T-cell (primary cell): ENCODE measurements at regions of chr20 and their contacts with region 1.

Region 1: DNA sequence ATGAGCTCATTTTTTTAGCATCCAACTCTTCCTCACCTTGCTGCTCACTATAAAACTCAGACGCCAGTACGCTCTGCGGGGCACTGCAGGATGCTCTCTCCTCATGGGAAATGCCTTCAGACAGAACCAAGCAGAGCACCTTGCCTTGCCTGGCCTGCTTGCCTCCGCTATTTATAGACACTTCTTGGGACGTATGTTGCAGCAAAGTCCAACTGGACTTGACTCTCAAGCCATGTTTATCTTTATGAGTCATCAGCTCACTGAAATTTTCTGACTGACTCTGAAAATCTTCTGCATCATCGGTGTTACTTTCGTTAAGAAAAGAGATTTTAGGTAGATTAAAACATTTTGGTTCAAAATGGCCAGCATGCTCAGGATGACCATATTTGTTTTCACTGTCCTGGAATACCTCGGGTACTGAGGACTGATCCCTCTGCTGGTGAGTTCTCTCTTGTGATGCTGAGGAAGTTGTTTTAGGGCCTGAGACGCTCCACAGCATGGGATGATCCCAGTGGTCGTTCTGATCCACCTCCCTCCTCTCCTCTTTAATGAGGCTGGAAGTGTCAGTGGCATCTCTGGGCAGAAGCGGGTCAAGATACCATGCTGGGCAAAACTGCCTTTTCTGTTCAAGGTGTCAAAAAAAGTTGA is 204.5 kb downstream of the KIF16B start:
- DNase-seq: no peak
- ATAC-seq: no peak
- H3K4me3 ChIP-seq: no peak overlapping the region
- H3K4me3 Mint-ChIP-seq: no peak overlapping the region
- H3K27ac ChIP-seq: no peak overlapping the region
- H3K27ac Mint-ChIP-seq: no peak overlapping the region
- H3K4me1 ChIP-seq: no peaks in the 10 kb centered on the region
- H3K4me1 Mint-ChIP-seq: no peaks in the 10 kb centered on the region
- H3K27me3 ChIP-seq: no peaks in the 10 kb centered on the region
- H3K27me3 Mint-ChIP-seq: no peaks in the 10 kb centered on the region

Region 2: DNA sequence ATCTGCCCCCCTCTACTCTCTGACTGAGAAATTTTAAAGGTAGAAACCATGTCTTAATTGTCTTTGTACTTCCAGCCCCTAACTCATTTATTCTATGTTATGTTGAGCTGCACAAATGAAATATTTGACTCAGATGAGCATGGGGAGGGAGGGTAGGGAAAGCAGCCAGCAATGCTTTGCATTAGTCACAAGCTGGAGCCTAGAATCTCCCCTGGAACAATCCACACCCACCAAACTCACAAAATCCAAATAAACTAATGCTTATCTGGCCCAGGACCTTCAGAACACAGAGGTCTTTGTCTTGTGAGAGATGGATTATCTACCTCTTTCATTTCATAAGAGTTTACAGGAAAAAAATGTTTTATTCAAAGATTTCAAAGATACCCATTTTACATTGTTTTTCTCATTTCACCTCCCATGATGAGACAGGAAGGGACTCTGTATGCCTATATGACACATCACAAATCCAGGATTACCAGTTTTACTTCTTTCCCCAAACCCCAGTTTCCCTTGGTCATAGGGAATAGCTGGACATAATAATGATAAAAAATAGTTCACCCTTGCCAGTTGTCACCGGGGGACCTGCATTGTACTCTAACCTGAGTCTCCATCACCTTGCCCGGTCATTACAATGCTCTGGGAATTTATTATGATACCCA is 262.4 kb before region 1 on chr20:
- CTCF ChIA-PET with region 1: interaction called in 1 of 2 experiments, 11 read pairs
- POLR2A ChIA-PET with region 1: no interaction called
- DNase-seq: no peak
- ATAC-seq: no peak
- H3K4me3 ChIP-seq: no peak overlapping the region
- H3K4me3 Mint-ChIP-seq: no peak overlapping the region
- H3K27ac ChIP-seq: no peak overlapping the region
- H3K27ac Mint-ChIP-seq: no peak overlapping the region
- H3K4me1 ChIP-seq: no peaks in the 10 kb centered on the region
- H3K4me1 Mint-ChIP-seq: peaks cover 0 to under 1% (median 0%) of the 10 kb centered on the region in 3 donors
- H3K27me3 ChIP-seq: no peaks in the 10 kb centered on the region
- H3K27me3 Mint-ChIP-seq: no peaks in the 10 kb centered on the region

Region 3: GRCh38 chr20:16378709-16379370 is 10.1 kb after region 1 on chr20:
- CTCF ChIA-PET with region 1: no interaction called
- POLR2A ChIA-PET with region 1: no interaction called
- DNase-seq: no peak
- ATAC-seq: no peak
- H3K4me3 ChIP-seq: no peak overlapping the region
- H3K4me3 Mint-ChIP-seq: no peak overlapping the region
- H3K27ac ChIP-seq: no peak overlapping the region
- H3K27ac Mint-ChIP-seq: no peak overlapping the region
- H3K4me1 ChIP-seq: no peaks in the 10 kb centered on the region
- H3K4me1 Mint-ChIP-seq: no peaks in the 10 kb centered on the region
- H3K27me3 ChIP-seq: no peaks in the 10 kb centered on the region
- H3K27me3 Mint-ChIP-seq: no peaks in the 10 kb centered on the region